GM12878 (cell line): ENCODE measurements at regions of chr10 and their contacts with region 1.

Region 1: DNA sequence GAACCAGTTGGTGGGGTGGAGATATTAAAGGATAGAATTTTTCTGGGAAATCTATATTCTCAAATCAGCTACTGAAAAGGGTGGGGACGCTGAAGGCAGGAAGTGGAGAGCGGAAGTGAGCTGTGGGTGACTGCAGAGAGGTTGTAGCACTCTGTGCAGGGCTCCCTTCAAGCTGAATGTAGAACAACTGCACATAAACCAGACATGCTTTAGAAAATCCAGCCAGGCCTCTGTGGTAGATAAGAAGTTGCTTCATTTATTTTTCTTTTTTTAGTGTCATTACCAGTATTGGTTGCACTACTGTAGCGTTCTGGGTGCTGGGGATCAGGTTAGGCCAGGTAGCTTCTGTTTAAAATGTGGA is 127.8 kb downstream of the CELF2 start:
- DNase-seq: no peak
- ATAC-seq: peak; percentile 92
- H3K4me3 ChIP-seq: peak overlapping the region; percentile 25; the same call in 1 of the 2 replicates
- H3K27ac ChIP-seq: peak overlapping the region; percentile 68
- H3K4me1 ChIP-seq: peaks cover 16% of the 10 kb centered on the region
- H3K27me3 ChIP-seq: no peaks in the 10 kb centered on the region
- CTCF ChIP-seq: no peak
- EP300 ChIP-seq: no peak
- POLR2A ChIP-seq: peak; percentile 25; the same call in 1 of the 2 replicates
- RAD21 ChIP-seq: no peak

Region 2: GRCh38 chr10:11159543-11160215 is 14.2 kb after region 1 on chr10:
- CTCF ChIA-PET with region 1: interaction called, 19 read pairs
- POLR2A ChIA-PET with region 1: interaction called, 15 read pairs
- RAD21 ChIA-PET with region 1: interaction called, 57 read pairs
- SMC1A ChIA-PET with region 1: interaction called, 99 read pairs
- in situ Hi-C with region 1: no loop called
- intact Hi-C with region 1: loop called (anchors 1 kb)
- DNase-seq: no peak
- ATAC-seq: no peak
- H3K4me3 ChIP-seq: no peak overlapping the region
- H3K27ac ChIP-seq: no peak overlapping the region
- H3K4me1 ChIP-seq: peaks cover 29% of the 10 kb centered on the region
- H3K27me3 ChIP-seq: no peaks in the 10 kb centered on the region
- CTCF ChIP-seq: no peak
- EP300 ChIP-seq: no peak
- POLR2A ChIP-seq: no peak
- RAD21 ChIP-seq: no peak

Region 3: DNA sequence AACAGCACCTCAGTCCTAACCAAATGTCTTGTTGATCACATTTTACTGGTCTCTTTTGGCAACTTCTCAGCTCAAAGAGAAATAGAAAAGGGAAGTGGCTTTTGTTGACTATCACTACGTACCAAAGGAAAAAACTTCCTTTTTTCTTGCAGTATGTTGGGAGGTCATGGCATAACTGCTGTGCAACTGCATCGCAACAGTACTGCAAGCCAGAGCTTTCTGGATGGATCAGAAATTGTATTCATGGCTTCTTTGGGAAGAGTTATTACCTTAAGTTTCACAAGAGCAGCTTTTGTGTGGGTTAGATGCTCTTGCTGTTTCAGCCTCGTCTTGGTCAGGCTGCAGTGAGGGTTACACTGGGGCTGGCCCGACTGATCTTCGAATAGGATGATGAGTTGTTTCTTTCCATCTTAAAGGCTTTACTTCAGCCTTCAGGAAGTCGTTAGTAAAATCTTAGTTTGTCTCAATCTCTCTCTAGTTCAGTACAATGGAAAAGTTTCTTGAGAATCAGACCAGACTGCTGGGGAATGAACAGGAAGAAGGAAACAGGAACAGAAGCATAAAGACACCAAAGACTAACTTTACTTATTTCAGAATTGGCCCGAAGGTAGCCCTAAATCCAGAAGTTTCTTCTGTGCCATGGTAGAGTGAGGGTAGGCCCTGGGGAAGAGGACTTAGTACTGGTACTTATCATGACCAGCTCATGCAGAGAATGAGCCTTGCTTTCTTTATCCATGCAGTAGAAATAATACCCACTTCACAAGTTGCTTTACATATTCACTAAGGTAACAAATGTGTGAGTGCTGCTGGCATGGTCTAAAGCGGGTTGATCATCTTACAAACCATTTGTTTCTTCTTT is 25.7 kb after region 1 on chr10:
- CTCF ChIA-PET with region 1: interaction called, 10 read pairs
- POLR2A ChIA-PET with region 1: interaction called, 6 read pairs
- RAD21 ChIA-PET with region 1: interaction called, 57 read pairs
- SMC1A ChIA-PET with region 1: interaction called, 99 read pairs
- in situ Hi-C with region 1: no loop called
- intact Hi-C with region 1: no loop called
- DNase-seq: no peak
- ATAC-seq: peak; percentile 23
- H3K4me3 ChIP-seq: peak overlapping the region; percentile 96
- H3K27ac ChIP-seq: peak overlapping the region; percentile 95
- H3K4me1 ChIP-seq: peaks cover 26% of the 10 kb centered on the region
- H3K27me3 ChIP-seq: no peaks in the 10 kb centered on the region
- CTCF ChIP-seq: no peak
- EP300 ChIP-seq: 0 out of 4 replicates have a peak, but pooled peaks of 1 of the 2 experiments have one; percentile 14
- POLR2A ChIP-seq: peak; percentile 33; the same call in 1 of the 2 replicates
- RAD21 ChIP-seq: no peak